Esophagus muscularis mucosa (tissue), 4 donors: ENCODE measurements at regions of chrX and their contacts with region 1.

Region 1: DNA sequence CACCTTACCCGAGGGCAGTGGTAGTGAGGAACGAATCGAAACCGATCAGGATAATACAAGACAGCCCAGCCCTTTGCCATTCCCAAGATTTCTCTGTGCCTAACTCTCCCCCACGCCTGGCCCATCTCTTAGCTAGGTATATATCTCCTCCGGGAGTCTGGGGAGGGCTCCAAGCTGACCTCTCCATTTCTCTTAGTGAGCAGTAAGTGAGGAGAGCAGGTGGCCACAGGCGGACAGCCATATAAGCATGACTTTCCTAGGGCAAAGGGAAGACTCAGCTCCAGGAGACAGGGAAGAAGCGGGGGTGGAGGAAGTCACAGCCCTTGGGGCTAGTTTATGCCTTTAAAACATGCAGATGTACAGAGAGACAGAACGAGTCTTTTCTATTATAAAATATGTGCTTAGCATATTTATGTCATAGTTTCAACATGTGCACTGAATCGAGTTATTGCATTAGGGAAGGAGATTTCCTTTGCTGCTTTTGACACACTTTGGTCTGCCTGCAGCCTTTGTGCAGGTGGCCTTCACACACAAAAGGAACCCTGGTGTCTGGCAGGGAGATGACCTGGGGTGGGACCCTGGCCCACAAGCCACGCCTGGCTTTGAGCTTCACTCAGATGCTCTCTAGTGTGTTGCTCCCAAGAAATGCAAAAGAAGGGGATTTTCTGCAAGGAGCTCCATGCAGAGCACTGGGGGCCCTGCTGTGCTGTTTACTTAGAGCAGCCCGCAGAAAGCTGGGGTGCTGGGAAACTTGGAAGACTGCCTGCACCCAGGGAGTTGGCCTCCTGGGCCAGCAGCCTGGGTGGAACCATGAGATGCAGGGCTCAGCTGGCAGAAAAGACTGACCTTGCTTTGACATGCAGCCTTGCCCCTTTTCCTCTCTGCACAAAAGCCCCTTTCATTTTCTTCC is 613.3 kb downstream of the BCOR start:
- DNase-seq: no peak
- H3K4me3 ChIP-seq: no peak overlapping the region
- H3K27ac ChIP-seq: no peak overlapping the region
- H3K4me1 ChIP-seq: peaks cover 0 to 7% (median 0%) of the 10 kb centered on the region in 4 donors
- H3K27me3 ChIP-seq: no peaks in the 10 kb centered on the region
- CTCF ChIP-seq: no peak
- EP300 ChIP-seq: no peak
- POLR2A ChIP-seq: no peak

Region 2: GRCh38 chrX:39174772-39175417 is 309.5 kb before region 1 on chrX:
- intact Hi-C with region 1: no loop called
- DNase-seq: no peak
- H3K4me3 ChIP-seq: peak overlapping the region; percentile 5 to 38 (median 24)
- H3K27ac ChIP-seq: peak overlapping the region in 1 of 4 donors; percentile 4
- H3K4me1 ChIP-seq: peaks cover 0 to 15% (median 12%) of the 10 kb centered on the region in 4 donors
- H3K27me3 ChIP-seq: no peaks in the 10 kb centered on the region
- CTCF ChIP-seq: no peak
- EP300 ChIP-seq: no peak
- POLR2A ChIP-seq: no peak

Region 3: DNA sequence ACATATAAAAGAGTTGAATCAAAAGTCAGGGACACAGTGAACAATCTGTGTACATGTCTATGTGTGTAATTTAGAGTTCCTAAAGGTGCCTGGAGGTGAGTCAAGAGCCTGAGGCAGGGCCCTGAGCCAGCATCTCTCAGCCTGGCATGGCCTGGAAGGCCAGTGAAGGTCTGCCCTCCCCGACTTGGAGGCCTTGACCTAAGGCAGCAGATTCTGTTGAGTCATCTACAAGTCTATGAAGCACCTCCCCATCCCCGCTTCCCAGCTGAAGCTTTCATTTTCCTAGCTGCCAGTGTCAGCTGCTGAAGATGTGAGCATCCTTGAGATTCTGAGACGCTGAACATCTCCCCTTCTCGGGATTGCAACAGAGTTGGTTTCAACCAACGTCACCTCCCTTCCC is 29.4 kb after region 1 on chrX:
- intact Hi-C with region 1: loop called (anchors 2 kb)
- DNase-seq: no peak
- H3K4me3 ChIP-seq: no peak overlapping the region
- H3K27ac ChIP-seq: no peak overlapping the region
- H3K4me1 ChIP-seq: peaks cover 0 to 12% (median 7%) of the 10 kb centered on the region in 4 donors
- H3K27me3 ChIP-seq: no peaks in the 10 kb centered on the region
- CTCF ChIP-seq: no peak
- EP300 ChIP-seq: no peak
- POLR2A ChIP-seq: no peak